Activated naive CD4-positive, alpha-beta T cell treated with anti-CD3 and anti-CD28 coated beads, Interleukin-2, amount 10 ng/mL, durations not matched to agents 7 days and 5 days (primary cell): ENCODE measurements at regions of chr19 and their contacts with region 1.

Region 1: GRCh38 chr19:55632463-55632834 is 8.1 kb upstream of the ZNF784 start:
- DNase-seq: peak; percentile 93
- H3K4me3 Mint-ChIP-seq: no peak overlapping the region
- H3K27ac Mint-ChIP-seq: peak overlapping the region; percentile 19
- H3K4me1 Mint-ChIP-seq: peaks cover 51% of the 10 kb centered on the region
- H3K27me3 Mint-ChIP-seq: peaks cover 39% of the 10 kb centered on the region

Region 2: DNA sequence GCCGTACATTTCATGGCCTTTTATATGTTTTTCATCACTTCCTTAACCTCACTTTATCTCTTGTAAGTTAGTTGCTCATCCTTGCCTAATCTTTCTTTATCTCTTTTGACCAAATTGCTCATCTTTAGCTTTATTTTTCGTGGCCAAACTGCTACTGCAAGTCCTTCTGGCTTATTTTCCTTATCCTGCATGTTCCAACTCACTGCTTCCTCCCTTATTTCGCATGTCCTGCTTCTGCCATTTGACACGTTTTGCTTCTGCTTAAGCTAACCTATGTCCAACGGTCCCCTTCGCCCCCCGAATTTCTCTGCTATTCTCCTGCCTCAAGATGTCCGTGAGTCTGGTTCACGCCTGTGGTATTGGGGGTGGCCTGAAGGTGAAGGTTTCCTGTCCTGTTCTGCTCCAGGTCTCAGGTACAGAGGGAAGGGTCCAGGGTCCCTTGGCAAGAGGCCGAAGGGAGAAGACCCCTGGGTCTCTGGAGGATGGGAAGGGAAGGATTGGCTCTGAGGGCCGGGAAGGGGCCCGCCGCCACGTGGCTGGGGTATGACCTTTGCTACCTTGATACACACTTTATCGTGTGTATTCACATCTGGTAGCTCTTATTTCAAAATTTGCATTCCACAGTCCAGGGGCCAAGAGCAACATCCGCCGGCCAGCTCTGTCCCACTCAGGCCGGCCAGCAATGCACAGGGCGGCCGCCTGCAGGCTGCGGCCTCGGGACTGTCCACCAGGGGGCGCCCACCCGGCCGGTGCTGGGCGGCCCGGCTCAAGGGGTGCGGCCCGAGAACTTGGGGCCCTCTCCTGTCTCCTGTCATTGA is 165.0 kb before region 1 on chr19:
- CTCF ChIA-PET with region 1: interaction called, 12 read pairs
- DNase-seq: peak; percentile 76
- H3K4me3 Mint-ChIP-seq: no peak overlapping the region
- H3K27ac Mint-ChIP-seq: no peak overlapping the region
- H3K4me1 Mint-ChIP-seq: peaks cover 6% of the 10 kb centered on the region
- H3K27me3 Mint-ChIP-seq: peaks cover 35% of the 10 kb centered on the region

Region 3: DNA sequence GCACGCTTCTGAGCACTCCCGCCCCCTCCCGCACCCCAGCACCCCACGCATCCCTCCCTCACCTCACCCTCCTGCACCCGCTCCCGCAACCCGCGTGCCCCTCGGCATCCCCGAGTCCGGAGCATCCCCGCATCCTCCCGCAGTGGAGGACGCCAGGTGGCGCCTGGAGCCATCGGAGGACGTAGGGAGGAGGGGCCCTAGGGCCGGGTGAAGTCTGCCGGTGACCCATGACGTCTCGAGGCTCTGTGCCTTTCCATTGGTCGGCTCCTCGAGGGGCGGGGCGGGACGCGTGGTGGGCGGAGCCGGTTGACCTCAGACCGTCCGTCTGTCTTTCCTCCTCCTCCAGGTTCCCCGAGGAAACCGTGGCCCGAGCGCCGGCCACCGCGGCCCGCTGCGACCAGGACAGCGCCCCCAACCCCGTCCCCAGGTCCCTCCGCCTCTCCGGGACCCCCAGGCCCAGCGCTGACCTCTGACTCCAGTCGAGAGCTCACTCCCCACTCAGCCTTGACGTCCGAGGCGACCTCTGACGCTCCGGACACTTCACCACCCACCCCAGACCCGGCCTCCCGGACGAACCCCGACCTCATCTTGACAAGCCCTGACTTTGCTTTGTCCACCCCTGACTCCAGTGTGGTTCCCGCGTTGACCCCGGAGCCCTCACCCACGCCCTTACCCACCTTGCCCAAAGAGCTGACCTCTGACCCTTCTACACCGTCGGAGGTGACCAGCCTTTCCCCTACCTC is 115.4 kb before region 1 on chr19:
- CTCF ChIA-PET with region 1: interaction called, 35 read pairs
- DNase-seq: peak; percentile 92
- H3K4me3 Mint-ChIP-seq: peak overlapping the region; percentile 63
- H3K27ac Mint-ChIP-seq: no peak overlapping the region
- H3K4me1 Mint-ChIP-seq: peaks cover 3% of the 10 kb centered on the region
- H3K27me3 Mint-ChIP-seq: peaks cover 17% of the 10 kb centered on the region

Region 4: GRCh38 chr19:55593096-55593772 is 39.2 kb before region 1 on chr19:
- CTCF ChIA-PET with region 1: no interaction called
- DNase-seq: no peak
- H3K4me3 Mint-ChIP-seq: no peak overlapping the region
- H3K27ac Mint-ChIP-seq: no peak overlapping the region
- H3K4me1 Mint-ChIP-seq: peaks cover 7% of the 10 kb centered on the region
- H3K27me3 Mint-ChIP-seq: no peaks in the 10 kb centered on the region

Region 5: GRCh38 chr19:55605207-55605636 is 27.2 kb before region 1 on chr19:
- CTCF ChIA-PET with region 1: interaction called, 21 read pairs
- DNase-seq: peak; percentile 99
- H3K4me3 Mint-ChIP-seq: peak overlapping the region; percentile 93
- H3K27ac Mint-ChIP-seq: peak overlapping the region; percentile 98
- H3K4me1 Mint-ChIP-seq: peaks cover 56% of the 10 kb centered on the region
- H3K27me3 Mint-ChIP-seq: no peaks in the 10 kb centered on the region

Region 6: GRCh38 chr19:55643348-55644176 is 11.1 kb after region 1 on chr19 and contains the start of gene ZNF581:
- CTCF ChIA-PET with region 1: interaction called, 15 read pairs
- DNase-seq: peak; percentile 84
- H3K4me3 Mint-ChIP-seq: peak within 1 kb of the TSS; percentile 92
- H3K27ac Mint-ChIP-seq: peak within 1 kb of the TSS; percentile 93
- H3K4me1 Mint-ChIP-seq: peaks cover 65% of the 10 kb centered on the region
- H3K27me3 Mint-ChIP-seq: no peaks in the 10 kb centered on the region

Region 7: DNA sequence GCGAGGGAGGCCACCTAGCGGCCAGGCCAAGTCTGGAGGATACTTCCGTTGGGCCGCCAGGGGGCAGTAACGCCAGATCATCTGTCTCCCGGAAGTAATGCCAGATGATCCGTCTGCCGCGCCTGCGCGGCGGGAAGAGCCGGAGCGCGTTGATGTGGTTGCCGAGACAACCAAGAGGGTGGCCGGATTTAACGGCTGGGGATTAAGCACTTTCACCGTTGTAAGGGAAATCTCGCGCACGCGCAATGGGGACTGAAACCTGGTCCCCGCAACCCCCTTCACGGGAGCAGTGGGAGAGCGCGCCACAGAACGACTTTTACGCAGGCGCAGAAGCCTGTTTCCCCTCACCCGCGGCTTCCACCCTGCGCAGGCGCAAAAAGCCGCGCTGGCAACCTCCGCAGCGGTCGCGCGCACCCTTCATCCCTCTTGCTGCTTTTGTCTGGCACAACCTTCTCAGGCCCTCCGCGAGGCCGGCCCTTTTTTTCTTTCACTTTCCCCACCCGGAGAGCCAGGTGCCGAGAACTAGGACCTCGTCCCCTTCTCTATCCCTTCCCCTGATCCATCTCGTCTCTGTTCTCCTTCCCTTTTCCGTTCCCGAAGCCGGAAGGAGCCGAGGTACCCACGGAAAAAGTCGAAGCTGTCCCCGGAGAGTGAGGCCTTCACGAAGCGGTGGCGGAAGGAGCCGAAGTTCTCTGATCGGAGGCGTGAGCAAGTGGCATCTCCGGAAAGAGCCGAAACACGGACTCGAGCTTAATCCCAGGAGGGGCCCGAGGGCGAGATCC is 21.5 kb after region 1 on chr19:
- CTCF ChIA-PET with region 1: interaction called, 23 read pairs
- DNase-seq: peak; percentile 100
- H3K4me3 Mint-ChIP-seq: peak overlapping the region; percentile 78
- H3K27ac Mint-ChIP-seq: peak overlapping the region; percentile 92
- H3K4me1 Mint-ChIP-seq: peaks cover 48% of the 10 kb centered on the region
- H3K27me3 Mint-ChIP-seq: peaks cover 4% of the 10 kb centered on the region

Region 8: GRCh38 chr19:55809381-55810058 is 177.1 kb after region 1 on chr19:
- CTCF ChIA-PET with region 1: interaction called, 22 read pairs
- DNase-seq: peak; percentile 50
- H3K4me3 Mint-ChIP-seq: no peak overlapping the region
- H3K27ac Mint-ChIP-seq: no peak overlapping the region
- H3K4me1 Mint-ChIP-seq: peaks cover 4% of the 10 kb centered on the region
- H3K27me3 Mint-ChIP-seq: no peaks in the 10 kb centered on the region